ENCODE measurements at regions of chr3 and their contacts with region 1.

Region 1: DNA sequence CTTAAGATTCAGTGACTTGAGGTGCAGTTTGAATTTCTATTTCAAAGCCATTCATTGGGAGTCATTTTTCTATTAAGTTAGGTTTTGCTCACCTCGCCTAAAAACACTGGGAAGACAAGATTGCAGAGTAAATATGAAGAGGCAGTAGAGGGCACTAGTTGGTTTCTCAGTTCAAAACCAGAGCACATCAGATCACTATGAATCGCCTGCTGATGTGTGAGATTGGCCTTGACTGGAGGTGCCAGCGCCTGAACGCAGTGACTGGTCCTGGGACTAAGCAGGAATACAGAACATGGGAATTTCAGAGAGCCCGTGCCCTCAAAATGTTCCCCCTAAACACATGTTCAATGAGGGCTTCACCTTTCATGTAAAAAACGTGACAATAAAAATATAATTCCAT is 229.0 kb downstream of the ITPR1 start:
- DNase-seq: peak; percentile 81
- H3K4me3 ChIP-seq: no peak overlapping the region
- H3K27ac ChIP-seq: peak overlapping the region; percentile 1
- H3K4me1 ChIP-seq: no peaks in the 10 kb centered on the region
- H3K27me3 ChIP-seq: no peaks in the 10 kb centered on the region
- CTCF ChIP-seq: peak; percentile 40 to 57
- POLR2A ChIP-seq: no peak

Region 2: GRCh38 chr3:4474683-4475490 is 247.2 kb before region 1 on chr3:
- CTCF ChIA-PET with region 1: no interaction called
- POLR2A ChIA-PET with region 1: no interaction called
- dilution Hi-C with region 1: no loop called
- intact Hi-C with region 1: no loop called
- DNase-seq: peak; percentile 97
- H3K4me3 ChIP-seq: no peak overlapping the region
- H3K27ac ChIP-seq: peak overlapping the region; percentile 60
- H3K4me1 ChIP-seq: peaks cover 22% of the 10 kb centered on the region
- H3K27me3 ChIP-seq: peaks cover 0 to 3% of the 10 kb centered on the region in 2 experiments
- CTCF ChIP-seq: no peak
- POLR2A ChIP-seq: no peak

Region 3: DNA sequence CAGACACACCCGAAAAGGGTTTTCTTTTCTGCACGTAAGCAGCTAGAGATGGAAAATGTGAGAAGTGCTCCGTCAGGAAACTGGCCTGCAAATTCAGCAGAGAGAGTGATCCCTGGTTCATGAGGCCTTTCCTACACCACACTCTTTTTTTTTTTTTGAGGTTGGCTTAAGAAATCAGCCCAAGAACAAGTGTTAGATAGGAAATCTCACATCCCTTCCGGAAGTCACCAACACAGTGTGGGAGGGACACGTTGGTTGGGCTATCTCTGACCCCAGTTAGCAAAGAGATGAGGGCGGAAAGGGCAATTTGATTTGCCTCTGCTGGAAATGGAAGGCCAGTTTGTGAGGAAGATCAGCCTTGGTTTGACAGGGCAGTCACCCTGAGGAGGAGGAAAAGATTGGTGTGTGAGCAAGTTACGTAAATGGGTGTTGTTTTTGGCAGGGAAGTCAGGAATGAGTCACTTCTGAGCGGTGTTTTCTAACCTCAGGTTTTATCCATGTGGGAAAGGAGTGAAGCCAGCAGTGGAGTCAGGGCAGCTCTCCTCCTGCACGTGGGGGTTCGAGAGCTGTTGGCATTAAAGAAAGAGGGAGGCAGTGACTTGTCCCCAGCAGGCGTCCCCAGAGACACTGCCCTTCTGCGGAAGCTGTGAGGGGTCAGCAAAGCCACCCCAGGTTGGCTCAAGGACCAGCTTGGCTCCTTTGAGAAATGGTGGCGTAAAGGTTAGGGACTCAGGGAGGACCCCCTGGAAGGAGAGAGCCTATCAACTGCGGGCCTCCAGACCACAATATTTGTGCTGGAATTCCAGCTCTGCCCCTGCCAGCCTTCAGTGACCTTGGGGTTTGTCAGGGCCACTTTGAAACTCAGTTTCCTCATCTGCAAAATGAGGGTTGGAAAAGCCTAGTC is 19.6 kb after region 1 on chr3:
- CTCF ChIA-PET with region 1: interaction called, 5 read pairs
- POLR2A ChIA-PET with region 1: no interaction called
- dilution Hi-C with region 1: no loop called
- intact Hi-C with region 1: loop called (anchors 1 kb)
- DNase-seq: peak; percentile 99
- H3K4me3 ChIP-seq: peak overlapping the region in 1 of 3 experiments; percentile 10
- H3K27ac ChIP-seq: peak overlapping the region; percentile 99
- H3K4me1 ChIP-seq: peaks cover 28% of the 10 kb centered on the region
- H3K27me3 ChIP-seq: no peaks in the 10 kb centered on the region
- CTCF ChIP-seq: no peak
- POLR2A ChIP-seq: peak; percentile 41

Region 4: DNA sequence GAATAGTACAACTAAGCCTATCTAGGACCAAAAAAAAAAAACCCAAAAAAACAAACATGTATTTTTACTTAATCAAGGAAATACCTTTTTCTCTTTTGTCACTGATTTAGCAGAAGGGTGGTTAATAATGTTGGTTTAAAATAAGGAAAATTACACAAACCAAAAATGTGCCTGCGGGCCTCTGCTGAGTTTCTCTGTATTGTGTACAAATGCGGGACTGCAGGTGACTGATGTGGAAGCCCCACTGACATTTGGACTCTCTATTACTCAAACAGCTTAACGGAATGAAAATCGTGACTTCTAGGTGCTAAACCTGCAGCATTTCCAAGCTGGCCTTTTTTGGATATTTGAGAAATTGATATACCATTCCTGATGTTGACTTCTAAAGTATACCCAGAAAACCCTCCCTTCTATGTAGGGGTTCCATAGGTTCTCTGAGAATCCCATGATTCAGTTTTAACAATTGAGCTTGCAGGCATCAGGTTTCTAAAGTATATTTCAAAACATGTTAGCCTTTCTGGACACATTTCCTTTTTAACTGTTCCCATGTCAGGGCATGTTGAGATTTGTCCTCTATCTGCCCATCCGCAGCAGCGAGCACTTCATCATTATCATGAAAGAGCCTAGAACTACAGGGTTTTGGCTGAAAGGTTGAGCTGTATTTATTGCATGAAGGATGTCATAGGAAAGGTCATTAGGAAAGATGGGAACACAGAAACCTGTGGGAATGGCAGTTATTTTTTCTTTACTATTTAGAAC is 55.8 kb after region 1 on chr3:
- CTCF ChIA-PET with region 1: no interaction called
- POLR2A ChIA-PET with region 1: no interaction called
- dilution Hi-C with region 1: no loop called
- intact Hi-C with region 1: no loop called
- DNase-seq: no peak
- H3K4me3 ChIP-seq: no peak overlapping the region
- H3K27ac ChIP-seq: no peak overlapping the region
- H3K4me1 ChIP-seq: no peaks in the 10 kb centered on the region
- H3K27me3 ChIP-seq: no peaks in the 10 kb centered on the region
- CTCF ChIP-seq: no peak
- POLR2A ChIP-seq: no peak

Region 5: GRCh38 chr3:4831580-4831950 is 109.5 kb after region 1 on chr3:
- CTCF ChIA-PET with region 1: interaction called, 6 read pairs
- POLR2A ChIA-PET with region 1: no interaction called
- dilution Hi-C with region 1: no loop called
- intact Hi-C with region 1: loop called (anchors 1 kb)
- DNase-seq: no peak
- H3K4me3 ChIP-seq: no peak overlapping the region
- H3K27ac ChIP-seq: peak overlapping the region; percentile 97
- H3K4me1 ChIP-seq: peaks cover 19% of the 10 kb centered on the region
- H3K27me3 ChIP-seq: no peaks in the 10 kb centered on the region
- CTCF ChIP-seq: no peak
- POLR2A ChIP-seq: peak; percentile 3

Region 6: GRCh38 chr3:4898454-4899313 is 176.6 kb after region 1 on chr3:
- CTCF ChIA-PET with region 1: interaction called, 10 read pairs
- POLR2A ChIA-PET with region 1: no interaction called
- dilution Hi-C with region 1: no loop called
- intact Hi-C with region 1: no loop called
- DNase-seq: no peak
- H3K4me3 ChIP-seq: no peak overlapping the region
- H3K27ac ChIP-seq: no peak overlapping the region
- H3K4me1 ChIP-seq: peaks cover 5% of the 10 kb centered on the region
- H3K27me3 ChIP-seq: no peaks in the 10 kb centered on the region
- CTCF ChIP-seq: no peak
- POLR2A ChIP-seq: no peak

Region 7: DNA sequence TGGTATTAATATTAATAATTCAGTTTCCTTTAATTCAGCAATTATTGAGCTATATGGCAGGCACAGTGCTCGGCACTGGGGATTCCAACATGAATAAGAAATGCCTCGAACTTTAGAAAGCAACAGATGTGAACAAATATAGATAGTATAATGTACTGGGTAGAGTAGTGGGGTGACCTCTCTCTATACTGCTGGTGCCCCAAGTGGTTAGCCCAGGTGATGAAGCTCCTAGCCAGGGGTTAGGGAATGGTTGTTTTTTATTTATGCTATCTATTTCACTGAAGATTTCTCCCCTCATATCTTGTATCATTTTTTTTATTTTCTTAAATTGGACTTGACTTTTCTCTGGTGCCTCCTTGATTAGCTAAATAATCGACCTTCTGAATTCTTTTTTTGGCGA is 319.2 kb after region 1 on chr3:
- CTCF ChIA-PET with region 1: interaction called, 13 read pairs
- POLR2A ChIA-PET with region 1: no interaction called
- dilution Hi-C with region 1: no loop called
- intact Hi-C with region 1: no loop called
- DNase-seq: no peak
- H3K4me3 ChIP-seq: no peak overlapping the region
- H3K27ac ChIP-seq: no peak overlapping the region
- H3K4me1 ChIP-seq: no peaks in the 10 kb centered on the region
- H3K27me3 ChIP-seq: no peaks in the 10 kb centered on the region
- CTCF ChIP-seq: no peak
- POLR2A ChIP-seq: no peak

Measured in endothelial cell of umbilical vein (primary cell).